AG04450 (cell line): ENCODE measurements at regions of chr20 and their contacts with region 1.

Region 1: GRCh38 chr20:41173161-41173721 is 35.9 kb downstream of the PLCG1 start:
- DNase-seq: peak; percentile 72
- H3K4me3 ChIP-seq: no peak overlapping the region
- H3K27ac ChIP-seq: peak overlapping the region; percentile 21
- H3K27me3 ChIP-seq: no peaks in the 10 kb centered on the region
- CTCF ChIP-seq: peak; percentile 99

Region 2: DNA sequence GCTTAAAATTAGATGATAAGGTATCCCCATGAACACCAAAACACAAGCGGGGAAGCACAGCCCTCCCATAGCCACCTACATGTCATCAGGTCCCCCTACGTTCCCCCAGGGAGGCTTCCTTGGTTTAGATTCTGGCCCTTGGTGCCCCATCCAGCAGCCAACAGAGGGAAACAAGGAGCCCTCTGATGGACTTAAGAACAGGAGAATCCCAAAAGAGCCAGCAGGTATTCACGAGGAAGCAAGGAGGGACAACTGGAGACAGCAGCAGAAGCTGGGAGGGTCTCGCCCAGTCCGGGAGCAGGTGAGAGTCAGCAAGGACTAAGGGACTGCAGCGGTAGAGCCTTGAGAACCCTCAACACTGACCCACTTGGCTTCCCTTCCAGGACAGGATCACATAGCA is 203.0 kb before region 1 on chr20:
- CTCF ChIA-PET with region 1: interaction called, 12 read pairs
- POLR2A ChIA-PET with region 1: no interaction called
- DNase-seq: no peak
- H3K4me3 ChIP-seq: no peak overlapping the region
- H3K27ac ChIP-seq: no peak overlapping the region
- H3K27me3 ChIP-seq: no peaks in the 10 kb centered on the region
- CTCF ChIP-seq: peak; percentile 28; the same call in 1 of the 2 replicates

Region 3: GRCh38 chr20:41149679-41150131 is 23.5 kb before region 1 on chr20:
- CTCF ChIA-PET with region 1: interaction called, 18 read pairs
- POLR2A ChIA-PET with region 1: no interaction called
- DNase-seq: no peak
- H3K4me3 ChIP-seq: no peak overlapping the region
- H3K27ac ChIP-seq: peak overlapping the region; percentile 21
- H3K27me3 ChIP-seq: no peaks in the 10 kb centered on the region
- CTCF ChIP-seq: no peak

Region 4: GRCh38 chr20:41218466-41218865 is 45.2 kb after region 1 on chr20:
- CTCF ChIA-PET with region 1: interaction called, 36 read pairs
- POLR2A ChIA-PET with region 1: interaction called, 3 read pairs
- DNase-seq: peak; percentile 11
- H3K4me3 ChIP-seq: no peak overlapping the region
- H3K27ac ChIP-seq: no peak overlapping the region
- H3K27me3 ChIP-seq: no peaks in the 10 kb centered on the region
- CTCF ChIP-seq: no peak

Region 5: GRCh38 chr20:41329435-41330342 is 156.4 kb after region 1 on chr20:
- CTCF ChIA-PET with region 1: interaction called, 22 read pairs
- POLR2A ChIA-PET with region 1: interaction called, 3 read pairs
- DNase-seq: peak; percentile 90
- H3K4me3 ChIP-seq: no peak overlapping the region
- H3K27ac ChIP-seq: peak overlapping the region; percentile 99
- H3K27me3 ChIP-seq: no peaks in the 10 kb centered on the region
- CTCF ChIP-seq: no peak

Region 6: DNA sequence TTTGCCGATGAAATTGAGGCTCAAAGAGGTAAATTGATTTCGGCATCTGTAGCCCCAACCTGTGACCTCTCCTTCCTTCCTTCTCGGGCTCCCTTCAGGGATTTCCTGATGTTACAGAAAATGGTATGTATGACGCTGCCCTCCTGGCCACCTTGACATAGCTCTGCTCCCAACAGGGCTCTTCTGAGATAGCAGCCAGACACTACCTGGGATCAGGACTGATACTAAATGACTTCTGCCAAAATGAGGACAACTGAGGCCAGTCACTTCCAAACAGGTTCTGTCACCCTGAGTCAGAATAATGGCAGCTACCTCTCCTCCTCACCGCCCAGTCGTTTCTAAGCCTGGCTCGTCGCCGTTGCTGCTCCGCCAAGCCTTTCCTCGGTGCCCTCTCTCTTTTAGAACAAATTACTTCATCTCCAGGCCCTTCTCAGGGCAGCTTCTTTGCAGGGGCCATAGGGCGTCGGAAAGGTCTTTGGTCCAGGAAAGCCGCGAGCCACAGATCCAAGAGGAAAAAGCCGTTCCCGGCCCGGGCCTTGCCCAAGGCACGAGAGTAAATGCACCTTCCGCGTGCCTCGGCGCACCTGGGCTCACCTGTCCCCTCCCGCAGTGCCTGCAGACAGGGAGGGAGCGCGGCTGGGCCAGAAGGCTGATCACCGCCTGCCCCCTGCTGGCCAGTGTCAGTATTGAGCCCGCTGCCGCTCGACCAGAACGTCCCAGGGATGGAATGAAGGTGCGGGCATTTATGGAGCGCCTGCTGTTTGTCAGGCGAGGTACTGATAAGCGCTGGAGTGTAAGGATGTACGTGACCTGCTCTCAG is 166.5 kb after region 1 on chr20:
- CTCF ChIA-PET with region 1: interaction called, 170 read pairs
- POLR2A ChIA-PET with region 1: interaction called, 5 read pairs
- DNase-seq: no peak
- H3K4me3 ChIP-seq: peak overlapping the region; percentile 49
- H3K27ac ChIP-seq: peak overlapping the region; percentile 47
- H3K27me3 ChIP-seq: no peaks in the 10 kb centered on the region
- CTCF ChIP-seq: peak; percentile 94

Region 7: DNA sequence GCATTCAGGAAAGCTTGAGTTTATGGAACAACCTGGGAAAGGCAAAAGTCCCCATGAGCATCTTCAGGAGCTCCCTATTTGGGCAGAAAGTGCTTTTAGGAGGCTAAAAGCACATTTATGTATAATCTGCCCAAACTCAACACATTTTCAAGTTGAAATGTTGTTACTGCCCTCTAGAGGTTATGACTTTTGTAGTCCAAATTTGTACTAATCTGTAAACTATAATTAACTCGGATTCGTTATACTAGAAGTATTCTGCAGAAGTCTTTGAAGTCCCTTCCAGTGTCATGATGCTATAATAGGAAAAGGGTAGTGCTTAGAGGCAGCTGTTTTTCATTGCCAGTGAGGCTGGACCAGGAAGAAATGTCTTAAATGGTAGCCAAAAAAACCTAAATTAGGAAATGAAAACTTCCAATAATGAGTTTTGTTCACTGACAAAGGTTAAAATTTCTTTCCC is 238.2 kb after region 1 on chr20:
- CTCF ChIA-PET with region 1: interaction called, 42 read pairs
- POLR2A ChIA-PET with region 1: no interaction called
- DNase-seq: no peak
- H3K4me3 ChIP-seq: no peak overlapping the region
- H3K27ac ChIP-seq: no peak overlapping the region
- H3K27me3 ChIP-seq: no peaks in the 10 kb centered on the region
- CTCF ChIP-seq: peak; percentile 55